AG04450 (cell line): ENCODE measurements at regions of chr6 and their contacts with region 1.

Region 1: GRCh38 chr6:139375232-139376016 is 976 bp upstream of the CITED2 start:
- DNase-seq: peak; percentile 95
- H3K4me3 ChIP-seq: peak overlapping the region; percentile 96
- H3K27ac ChIP-seq: peak overlapping the region; percentile 94
- H3K27me3 ChIP-seq: no peaks in the 10 kb centered on the region
- CTCF ChIP-seq: peak; percentile 23; the same call in 1 of the 2 replicates

Region 2: DNA sequence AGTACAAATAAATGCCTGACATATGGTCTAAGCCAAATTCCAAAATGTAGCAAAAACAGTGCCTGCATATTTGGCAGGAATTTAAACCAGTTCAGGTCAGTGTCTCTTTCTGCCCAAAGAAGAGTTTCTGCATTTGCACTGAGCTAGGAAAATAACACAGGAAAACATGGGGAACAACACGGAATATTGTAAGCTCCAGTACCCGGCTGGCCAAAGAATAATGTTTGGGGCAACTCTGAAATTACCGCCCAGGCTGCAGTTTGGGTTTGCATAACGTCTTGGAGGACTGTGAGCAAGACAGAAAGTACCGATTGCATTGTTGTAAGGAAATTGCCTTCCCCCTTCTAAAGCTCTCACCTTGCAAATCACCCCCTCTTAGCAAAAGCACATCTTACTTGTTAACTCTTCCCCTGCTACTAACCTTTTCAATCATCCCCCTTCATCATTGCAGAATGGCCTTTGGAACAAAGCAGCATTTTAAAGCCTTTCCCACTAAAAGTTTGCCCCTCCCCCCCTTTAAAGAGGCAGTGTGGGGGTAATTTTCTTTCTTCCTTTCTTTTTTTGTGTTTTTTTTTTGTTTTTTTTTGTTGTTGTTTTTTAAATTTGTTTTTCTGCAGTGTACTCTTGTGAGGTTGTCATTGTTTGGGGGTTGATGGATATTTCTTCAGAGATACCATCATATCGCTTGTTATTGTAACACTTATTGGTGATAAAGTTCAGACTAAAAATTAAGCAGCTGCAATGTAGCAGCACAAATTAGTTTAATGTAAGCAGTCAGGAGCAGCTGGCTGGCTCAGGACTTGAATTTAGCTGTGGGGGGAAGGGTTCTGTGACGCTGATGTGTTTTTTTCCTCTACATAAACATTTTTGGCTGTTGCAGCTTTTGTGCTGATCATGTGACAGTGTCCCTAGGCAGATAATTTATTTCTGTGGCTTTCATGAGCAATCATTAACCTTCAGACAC is 99.0 kb after region 1 on chr6:
- CTCF ChIA-PET with region 1: interaction called, 3 read pairs
- POLR2A ChIA-PET with region 1: interaction called, 17 read pairs
- DNase-seq: peak; percentile 23
- H3K4me3 ChIP-seq: peak overlapping the region; percentile 26
- H3K27ac ChIP-seq: no peak overlapping the region
- H3K27me3 ChIP-seq: no peaks in the 10 kb centered on the region
- CTCF ChIP-seq: no peak

Region 3: GRCh38 chr6:139568956-139569548 is 193.6 kb after region 1 on chr6:
- CTCF ChIA-PET with region 1: no interaction called
- POLR2A ChIA-PET with region 1: interaction called, 20 read pairs
- DNase-seq: peak; percentile 47
- H3K4me3 ChIP-seq: no peak overlapping the region
- H3K27ac ChIP-seq: peak overlapping the region; percentile 62
- H3K27me3 ChIP-seq: no peaks in the 10 kb centered on the region
- CTCF ChIP-seq: no peak

Region 4: GRCh38 chr6:139597771-139598755 is 222.6 kb after region 1 on chr6:
- CTCF ChIA-PET with region 1: interaction called, 6 read pairs
- POLR2A ChIA-PET with region 1: interaction called, 45 read pairs
- DNase-seq: peak; percentile 95
- H3K4me3 ChIP-seq: no peak overlapping the region
- H3K27ac ChIP-seq: peak overlapping the region; percentile 95
- H3K27me3 ChIP-seq: no peaks in the 10 kb centered on the region
- CTCF ChIP-seq: no peak

Region 5: DNA sequence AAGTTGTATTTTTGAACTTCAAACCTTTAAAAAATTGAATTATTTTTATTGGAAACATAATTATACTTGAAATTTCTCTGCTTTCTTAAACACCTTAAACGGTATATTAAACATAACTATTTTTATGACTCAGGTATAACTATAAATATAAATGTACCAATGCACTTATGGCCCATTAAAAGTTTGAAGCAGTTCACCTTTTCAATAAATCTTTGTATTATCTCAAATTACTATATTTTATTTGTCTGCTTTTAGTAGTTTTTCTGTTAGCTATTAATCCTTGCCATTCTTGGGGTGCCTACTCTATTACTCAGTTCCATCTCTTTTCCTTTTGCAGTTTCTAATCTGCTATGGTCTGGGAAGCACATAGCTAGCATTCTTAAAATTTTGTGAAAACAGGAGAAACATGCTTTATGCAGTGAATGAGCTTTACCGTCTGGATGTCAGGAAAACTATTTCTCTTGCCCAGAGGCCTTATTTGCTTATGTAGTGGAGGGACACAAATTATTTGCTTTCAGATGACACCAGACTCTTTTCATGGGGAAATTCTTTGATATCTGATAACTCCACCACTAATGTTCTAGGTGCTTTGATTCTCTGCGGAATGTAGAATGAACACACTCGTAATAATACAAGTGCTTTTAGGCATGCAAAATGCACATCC is 377.9 kb after region 1 on chr6:
- CTCF ChIA-PET with region 1: no interaction called
- POLR2A ChIA-PET with region 1: interaction called, 14 read pairs
- DNase-seq: no peak
- H3K4me3 ChIP-seq: no peak overlapping the region
- H3K27ac ChIP-seq: no peak overlapping the region
- H3K27me3 ChIP-seq: no peaks in the 10 kb centered on the region
- CTCF ChIP-seq: no peak

Region 6: GRCh38 chr6:139927236-139927635 is 551.8 kb after region 1 on chr6:
- CTCF ChIA-PET with region 1: no interaction called
- POLR2A ChIA-PET with region 1: interaction called, 16 read pairs
- DNase-seq: peak; percentile 57
- H3K4me3 ChIP-seq: no peak overlapping the region
- H3K27ac ChIP-seq: no peak overlapping the region
- H3K27me3 ChIP-seq: no peaks in the 10 kb centered on the region
- CTCF ChIP-seq: peak; percentile 54